Transverse colon (tissue), 4 donors: ENCODE measurements at regions of chr11 and their contacts with region 1.

Region 1: GRCh38 chr11:35066783-35067423 is 72.1 kb upstream of the CD44 start:
- DNase-seq: peak; percentile 25
- H3K4me3 ChIP-seq: no peak overlapping the region
- H3K27ac ChIP-seq: peak overlapping the region in 1 of 4 donors; percentile 26
- H3K4me1 ChIP-seq: peaks cover 0 to 11% (median 1%) of the 10 kb centered on the region in 4 donors
- H3K27me3 ChIP-seq: no peaks in the 10 kb centered on the region
- CTCF ChIP-seq: no peak
- EP300 ChIP-seq: no peak
- POLR2A ChIP-seq: no peak

Region 2: DNA sequence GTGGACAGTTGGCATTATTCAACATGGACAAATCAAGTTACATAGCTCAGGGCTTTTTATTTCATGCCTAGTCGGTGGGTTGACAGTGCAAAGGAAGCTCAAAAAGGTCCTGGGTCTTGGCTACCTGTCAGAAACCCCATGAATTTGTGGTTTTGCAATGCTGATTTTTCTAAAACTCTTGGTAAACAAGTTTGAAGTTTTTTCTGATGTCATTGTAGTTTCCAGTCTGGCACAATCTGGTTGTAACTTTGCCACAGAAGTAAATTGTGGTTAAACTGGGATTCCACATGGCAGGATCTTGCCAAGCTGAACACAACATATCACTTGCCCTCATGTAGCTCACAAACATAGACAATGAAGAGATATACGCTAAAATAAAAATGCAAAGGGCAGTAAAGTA is 345.3 kb before region 1 on chr11:
- in situ Hi-C with region 1: no loop called
- intact Hi-C with region 1: no loop called
- DNase-seq: no peak
- H3K4me3 ChIP-seq: no peak overlapping the region
- H3K27ac ChIP-seq: no peak overlapping the region
- H3K4me1 ChIP-seq: peaks cover 0 to 2% (median 0%) of the 10 kb centered on the region in 4 donors
- H3K27me3 ChIP-seq: no peaks in the 10 kb centered on the region
- CTCF ChIP-seq: no peak
- EP300 ChIP-seq: no peak
- POLR2A ChIP-seq: no peak

Region 3: GRCh38 chr11:35017528-35018342 is 49.2 kb before region 1 on chr11:
- in situ Hi-C with region 1: no loop called
- intact Hi-C with region 1: loop called (anchors 1 kb)
- DNase-seq: no peak
- H3K4me3 ChIP-seq: no peak overlapping the region
- H3K27ac ChIP-seq: no peak overlapping the region
- H3K4me1 ChIP-seq: peaks cover 0 to 22% (median 6%) of the 10 kb centered on the region in 4 donors
- H3K27me3 ChIP-seq: no peaks in the 10 kb centered on the region
- CTCF ChIP-seq: no peak
- EP300 ChIP-seq: no peak
- POLR2A ChIP-seq: no peak